Spleen (tissue), 13 donors: ENCODE measurements at regions of chr11 and their contacts with region 1.

Region 1: GRCh38 chr11:36564376-36565030 is 3.3 kb upstream of the RAG1 start:
- DNase-seq: no peak
- H3K4me3 ChIP-seq: peak overlapping the region in 4 of 8 donors; percentile 2 to 52 (median 22)
- H3K27ac ChIP-seq: no peak overlapping the region
- H3K4me1 ChIP-seq: peaks cover 0 to 7% (median 3%) of the 10 kb centered on the region in 6 donors
- H3K27me3 ChIP-seq: peaks cover 0 to 12% (median 0%) of the 10 kb centered on the region in 7 donors
- CTCF ChIP-seq: peak in 8 of 11 experiments; percentile 11 to 61 (median 50)
- POLR2A ChIP-seq: no peak

Region 2: DNA sequence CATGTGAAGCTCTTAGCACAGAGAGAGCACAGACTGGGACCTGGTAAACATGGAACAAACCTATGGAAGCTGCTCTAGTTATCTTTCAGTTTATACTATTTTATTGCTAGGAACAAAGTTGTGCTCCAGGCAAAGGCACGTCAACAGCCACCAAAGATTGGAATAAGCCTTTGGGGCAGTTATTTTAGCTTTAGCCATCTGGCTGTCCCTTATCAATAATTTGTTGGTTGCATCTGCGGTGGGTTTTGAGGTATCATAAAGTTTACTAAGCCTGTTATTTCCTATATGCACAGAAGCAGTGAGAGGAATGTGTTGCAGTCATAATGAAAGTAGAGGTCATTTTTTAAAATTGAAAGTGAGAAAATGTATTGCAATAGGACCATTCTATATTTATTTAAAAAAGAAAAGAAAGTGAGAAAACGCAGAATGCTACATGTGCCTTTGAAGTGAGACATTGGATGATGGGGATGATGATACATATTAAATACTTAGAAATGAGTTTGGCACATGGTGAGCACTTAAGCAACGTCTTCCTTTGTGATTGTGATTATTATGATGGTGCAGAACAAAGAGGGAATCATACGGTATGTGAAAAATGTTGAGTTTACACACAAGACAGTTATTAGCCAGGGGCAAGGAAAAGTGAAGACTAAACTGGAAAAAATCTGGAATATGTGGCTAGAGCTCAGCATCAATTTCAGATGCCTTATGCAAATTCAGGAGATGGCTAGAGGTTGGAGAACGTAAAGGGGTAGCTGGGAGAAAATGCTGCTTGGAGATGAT is 210.1 kb before region 1 on chr11:
- intact Hi-C with region 1: no loop called
- DNase-seq: no peak
- H3K4me3 ChIP-seq: no peak overlapping the region
- H3K27ac ChIP-seq: peak overlapping the region in 3 of 8 donors; percentile 1 to 22 (median 10)
- H3K4me1 ChIP-seq: peaks cover 0 to 78% (median 45%) of the 10 kb centered on the region in 6 donors
- H3K27me3 ChIP-seq: no peaks in the 10 kb centered on the region
- CTCF ChIP-seq: no peak
- POLR2A ChIP-seq: no peak

Region 3: DNA sequence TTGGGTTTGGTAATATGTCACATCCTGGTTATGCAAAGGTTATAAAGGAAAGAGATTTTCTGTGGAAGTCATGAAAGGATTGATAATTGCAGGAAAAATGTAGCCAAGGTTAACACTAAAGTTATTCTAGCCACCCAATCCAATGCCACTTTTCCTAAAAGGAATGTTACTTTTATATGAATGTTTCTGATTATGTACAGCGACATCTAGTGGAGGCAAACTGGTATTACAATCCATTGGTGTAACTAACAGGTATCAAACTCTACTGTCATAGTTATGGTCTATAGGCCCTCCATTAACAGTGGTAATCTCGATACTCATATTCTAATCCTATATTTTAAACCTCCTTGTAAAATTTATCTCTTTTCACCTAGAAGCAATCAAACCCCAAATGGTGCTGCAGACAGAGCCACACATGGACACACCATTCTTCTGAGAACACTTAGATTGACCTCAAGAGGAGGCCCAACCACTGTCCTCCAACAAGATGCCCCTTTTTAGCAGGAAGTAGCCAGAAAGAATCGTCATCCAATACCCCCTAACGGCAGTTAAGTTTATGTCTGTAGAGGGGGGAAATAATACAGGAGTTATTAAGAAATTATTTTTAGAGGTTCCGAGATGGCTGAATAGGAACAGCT is 108.4 kb after region 1 on chr11:
- intact Hi-C with region 1: loop called (anchors 10 kb)
- DNase-seq: no peak
- H3K4me3 ChIP-seq: no peak overlapping the region
- H3K27ac ChIP-seq: no peak overlapping the region
- H3K4me1 ChIP-seq: no peaks in the 10 kb centered on the region
- H3K27me3 ChIP-seq: no peaks in the 10 kb centered on the region
- CTCF ChIP-seq: peak; percentile 51 to 86 (median 77)
- POLR2A ChIP-seq: no peak

Region 4: DNA sequence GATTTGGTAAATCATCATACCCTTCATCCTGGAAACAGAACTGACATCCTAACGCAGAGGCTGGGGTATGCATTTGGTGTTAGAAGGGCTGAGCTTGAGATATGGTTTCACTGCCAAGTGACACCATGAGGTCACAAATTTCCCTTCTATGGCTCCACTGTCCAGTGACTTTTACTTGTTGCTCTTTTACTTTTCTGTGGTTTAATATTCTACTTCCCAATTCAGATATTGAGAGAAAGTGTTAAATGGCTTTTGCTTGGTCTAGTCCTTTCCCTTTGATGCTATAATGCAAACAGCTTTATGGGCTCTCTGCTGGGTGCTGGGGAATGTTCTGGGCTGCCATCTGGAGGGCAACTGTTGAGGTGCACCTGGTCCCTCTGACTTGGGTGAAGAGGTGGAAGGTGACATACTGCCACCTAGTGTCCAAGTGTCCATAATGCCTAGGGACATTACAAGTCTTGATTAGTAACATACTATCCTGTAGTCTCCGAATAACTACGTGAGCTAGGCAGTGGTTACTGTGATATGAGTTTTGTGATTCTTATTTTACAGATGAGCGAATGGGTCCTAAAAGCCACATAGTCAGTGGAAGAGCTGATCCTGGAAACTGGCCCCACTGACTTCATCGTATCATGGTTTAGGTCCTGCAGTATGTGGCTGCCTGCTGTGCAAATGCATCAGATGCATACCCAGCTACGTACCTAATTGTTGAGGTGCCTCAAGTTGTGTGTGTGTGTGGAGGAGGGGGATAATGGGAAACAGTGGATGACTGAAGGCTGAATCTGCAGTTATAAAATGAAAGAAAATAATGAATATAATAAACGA is 182.6 kb after region 1 on chr11:
- intact Hi-C with region 1: loop called (anchors 5 kb)
- DNase-seq: peak; percentile 86
- H3K4me3 ChIP-seq: no peak overlapping the region
- H3K27ac ChIP-seq: no peak overlapping the region
- H3K4me1 ChIP-seq: peaks cover 0 to 9% (median 0%) of the 10 kb centered on the region in 6 donors
- H3K27me3 ChIP-seq: peaks cover 0 to 23% (median 0%) of the 10 kb centered on the region in 7 donors
- CTCF ChIP-seq: peak; percentile 74 to 99 (median 95)
- POLR2A ChIP-seq: no peak